Breast epithelium (tissue), 4 donors: ENCODE measurements at regions of chr21 and their contacts with region 1.

Region 1: DNA sequence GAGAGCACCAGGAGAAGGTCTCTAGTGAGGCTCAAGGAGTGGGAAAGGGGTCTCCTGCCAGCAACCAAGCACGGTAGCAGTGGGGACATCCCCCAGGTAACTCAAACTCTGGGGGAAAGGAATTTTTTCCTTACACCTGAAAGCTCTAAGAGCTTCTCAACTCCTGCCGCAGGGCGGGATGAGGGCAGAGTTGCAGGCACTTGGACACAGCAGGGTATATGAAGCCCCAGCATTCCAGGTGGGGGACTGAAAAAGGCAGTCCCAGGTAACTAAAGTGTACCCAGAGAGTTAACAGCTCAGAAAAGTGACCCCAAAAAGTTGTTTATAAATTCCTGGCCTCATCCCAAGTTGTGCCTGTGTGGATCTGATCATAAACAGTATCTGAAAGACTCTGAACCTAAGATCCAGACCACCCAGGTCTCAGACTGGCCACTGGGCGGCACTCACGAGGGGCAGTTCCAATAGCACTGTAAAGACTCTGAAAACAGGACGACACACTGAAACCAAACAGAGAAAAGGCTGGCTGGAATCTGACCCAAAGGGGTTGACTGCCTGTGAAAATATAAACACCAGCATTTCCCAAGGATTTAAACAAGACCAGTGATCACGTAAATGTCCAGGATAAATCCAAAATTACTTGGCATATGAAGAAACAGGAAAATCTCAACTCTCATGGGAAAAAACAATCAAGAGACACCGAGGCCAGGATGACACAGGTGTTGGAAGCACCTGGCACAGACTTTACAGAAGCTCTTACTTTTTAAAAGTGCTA is 47.5 kb downstream of the HSF2BP start:
- DNase-seq: peak; percentile 66 to 67
- H3K4me3 ChIP-seq: no peak overlapping the region
- H3K27ac ChIP-seq: peak overlapping the region; percentile 11 to 48
- H3K4me1 ChIP-seq: peaks cover 3 to 4% of the 10 kb centered on the region in 2 donors
- H3K27me3 ChIP-seq: no peaks in the 10 kb centered on the region
- CTCF ChIP-seq: peak in 2 of 3 donors; percentile 55 to 64
- POLR2A ChIP-seq: no peak

Region 2: DNA sequence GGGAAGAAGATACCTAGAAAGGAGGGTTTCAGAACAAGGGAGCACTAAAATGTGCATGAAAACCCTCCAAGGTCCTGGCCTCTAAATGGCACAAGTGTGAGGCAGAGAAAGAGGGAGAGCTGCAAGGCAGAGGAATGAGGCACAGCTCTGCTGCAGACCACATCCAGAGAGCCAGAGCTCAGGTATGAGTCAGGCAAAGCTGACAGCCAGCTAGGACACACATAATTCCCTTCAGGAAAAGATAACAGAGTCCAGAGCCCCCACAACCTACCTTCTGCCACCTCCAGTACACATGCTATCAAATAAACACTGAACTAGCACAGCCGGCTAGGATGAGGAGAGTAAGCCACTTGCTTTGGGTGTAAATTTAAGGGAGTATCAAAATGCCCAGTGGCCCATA is 14.7 kb before region 1 on chr21:
- intact Hi-C with region 1: loop called (anchors 2 kb)
- DNase-seq: no peak
- H3K4me3 ChIP-seq: no peak overlapping the region
- H3K27ac ChIP-seq: no peak overlapping the region
- H3K4me1 ChIP-seq: no peaks in the 10 kb centered on the region
- H3K27me3 ChIP-seq: no peaks in the 10 kb centered on the region
- CTCF ChIP-seq: no peak
- POLR2A ChIP-seq: no peak